OCI-LY7 (cell line): ENCODE measurements at regions of chr12 and their contacts with region 1.

Region 1: GRCh38 chr12:101962486-101962885 is 85.1 kb downstream of the DRAM1 start:
- DNase-seq: no peak
- H3K4me3 ChIP-seq: no peak overlapping the region
- H3K27ac ChIP-seq: no peak overlapping the region
- H3K4me1 ChIP-seq: peaks cover 3% of the 10 kb centered on the region
- CTCF ChIP-seq: no peak

Region 2: DNA sequence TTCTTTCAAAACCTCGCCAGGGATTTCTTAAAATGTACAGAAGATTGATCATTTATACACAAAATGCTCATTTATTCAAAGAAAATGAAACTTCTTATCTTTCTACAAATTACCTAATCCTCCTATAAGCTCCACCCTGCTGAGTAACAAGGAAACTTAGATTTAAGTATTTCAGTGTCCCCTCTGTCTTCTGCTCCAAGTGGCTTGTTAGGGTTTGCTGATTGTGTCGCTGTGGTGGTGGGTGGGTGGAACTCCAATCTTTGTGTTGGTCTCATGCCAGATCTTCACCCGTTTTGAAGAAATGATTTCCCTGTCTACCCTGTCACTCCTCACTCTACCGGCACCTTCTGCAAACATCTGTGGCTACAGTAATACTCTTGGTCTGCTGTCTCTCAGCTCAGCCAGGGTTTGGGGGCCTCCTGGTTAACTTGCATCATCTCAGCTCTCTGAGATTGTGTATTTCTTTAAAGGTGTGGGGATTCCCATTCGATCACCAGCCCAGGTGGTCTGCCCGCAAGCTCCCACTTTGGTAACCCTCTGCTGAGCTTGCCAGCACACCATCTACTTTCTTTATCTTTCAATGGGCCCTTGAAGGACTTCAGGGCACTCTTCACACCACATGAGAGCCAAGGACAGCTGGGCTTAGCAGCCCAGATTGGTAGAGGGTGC is 11.3 kb before region 1 on chr12:
- CTCF ChIA-PET with region 1: interaction called, 4 read pairs
- POLR2A ChIA-PET with region 1: interaction called, 10 read pairs
- intact Hi-C with region 1: no loop called
- DNase-seq: no peak
- H3K4me3 ChIP-seq: no peak overlapping the region
- H3K27ac ChIP-seq: no peak overlapping the region
- H3K4me1 ChIP-seq: peaks cover 8% of the 10 kb centered on the region
- CTCF ChIP-seq: no peak

Region 3: DNA sequence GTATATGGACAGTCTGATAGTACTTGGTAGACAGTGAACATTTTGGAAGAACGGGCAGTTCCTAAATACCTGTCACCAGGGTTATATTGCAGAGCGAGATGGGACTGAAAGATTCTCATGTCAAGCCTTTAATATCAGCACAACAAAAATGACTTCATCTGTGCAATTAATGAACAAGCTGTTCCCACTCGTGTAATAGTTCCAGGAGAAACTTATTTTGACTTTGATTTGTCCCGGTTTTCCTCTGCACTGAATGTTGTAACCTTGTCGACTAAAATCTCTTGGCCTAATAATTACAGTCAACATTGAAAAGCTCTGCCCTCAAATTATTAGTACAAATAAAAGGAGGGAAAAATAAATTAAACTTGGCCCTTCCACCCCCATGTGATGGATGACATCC is 19.8 kb after region 1 on chr12:
- CTCF ChIA-PET with region 1: no interaction called
- POLR2A ChIA-PET with region 1: interaction called, 21 read pairs
- intact Hi-C with region 1: no loop called
- DNase-seq: no peak
- H3K4me3 ChIP-seq: no peak overlapping the region
- H3K27ac ChIP-seq: no peak overlapping the region
- H3K4me1 ChIP-seq: no peaks in the 10 kb centered on the region
- CTCF ChIP-seq: no peak

Region 4: GRCh38 chr12:102249077-102249841 is 286.8 kb after region 1 on chr12:
- CTCF ChIA-PET with region 1: no interaction called
- POLR2A ChIA-PET with region 1: no interaction called
- intact Hi-C with region 1: no loop called
- DNase-seq: no peak
- H3K4me3 ChIP-seq: no peak overlapping the region
- H3K27ac ChIP-seq: no peak overlapping the region
- H3K4me1 ChIP-seq: no peaks in the 10 kb centered on the region
- CTCF ChIP-seq: no peak